ENCODE measurements at regions of chr1 and their contacts with region 1.

Region 1: GRCh38 chr1:61851849-61852669 is 109.8 kb downstream of the PATJ start:
- DNase-seq: peak; percentile 69
- H3K4me3 ChIP-seq: no peak overlapping the region
- H3K27ac ChIP-seq: no peak overlapping the region
- H3K4me1 ChIP-seq: no peaks in the 10 kb centered on the region
- CTCF ChIP-seq: peak; percentile 95

Region 2: GRCh38 chr1:59971464-59971911 is 1880.6 kb before region 1 on chr1:
- CTCF ChIA-PET with region 1: no interaction called
- POLR2A ChIA-PET with region 1: no interaction called
- intact Hi-C with region 1: loop called (anchors 10 kb)
- DNase-seq: peak; percentile 20
- H3K4me3 ChIP-seq: no peak overlapping the region
- H3K27ac ChIP-seq: no peak overlapping the region
- H3K4me1 ChIP-seq: no peaks in the 10 kb centered on the region
- CTCF ChIP-seq: peak; percentile 87

Region 3: GRCh38 chr1:60978421-60979357 is 873.4 kb before region 1 on chr1:
- CTCF ChIA-PET with region 1: no interaction called
- POLR2A ChIA-PET with region 1: no interaction called
- intact Hi-C with region 1: loop called (anchors 10 kb)
- DNase-seq: peak; percentile 49
- H3K4me3 ChIP-seq: no peak overlapping the region
- H3K27ac ChIP-seq: no peak overlapping the region
- H3K4me1 ChIP-seq: no peaks in the 10 kb centered on the region
- CTCF ChIP-seq: peak; percentile 85

Region 4: GRCh38 chr1:61344696-61345095 is 507.4 kb before region 1 on chr1:
- CTCF ChIA-PET with region 1: no interaction called
- POLR2A ChIA-PET with region 1: no interaction called
- intact Hi-C with region 1: loop called (anchors 5 kb)
- DNase-seq: no peak
- H3K4me3 ChIP-seq: no peak overlapping the region
- H3K27ac ChIP-seq: no peak overlapping the region
- H3K4me1 ChIP-seq: no peaks in the 10 kb centered on the region
- CTCF ChIP-seq: no peak

Region 5: DNA sequence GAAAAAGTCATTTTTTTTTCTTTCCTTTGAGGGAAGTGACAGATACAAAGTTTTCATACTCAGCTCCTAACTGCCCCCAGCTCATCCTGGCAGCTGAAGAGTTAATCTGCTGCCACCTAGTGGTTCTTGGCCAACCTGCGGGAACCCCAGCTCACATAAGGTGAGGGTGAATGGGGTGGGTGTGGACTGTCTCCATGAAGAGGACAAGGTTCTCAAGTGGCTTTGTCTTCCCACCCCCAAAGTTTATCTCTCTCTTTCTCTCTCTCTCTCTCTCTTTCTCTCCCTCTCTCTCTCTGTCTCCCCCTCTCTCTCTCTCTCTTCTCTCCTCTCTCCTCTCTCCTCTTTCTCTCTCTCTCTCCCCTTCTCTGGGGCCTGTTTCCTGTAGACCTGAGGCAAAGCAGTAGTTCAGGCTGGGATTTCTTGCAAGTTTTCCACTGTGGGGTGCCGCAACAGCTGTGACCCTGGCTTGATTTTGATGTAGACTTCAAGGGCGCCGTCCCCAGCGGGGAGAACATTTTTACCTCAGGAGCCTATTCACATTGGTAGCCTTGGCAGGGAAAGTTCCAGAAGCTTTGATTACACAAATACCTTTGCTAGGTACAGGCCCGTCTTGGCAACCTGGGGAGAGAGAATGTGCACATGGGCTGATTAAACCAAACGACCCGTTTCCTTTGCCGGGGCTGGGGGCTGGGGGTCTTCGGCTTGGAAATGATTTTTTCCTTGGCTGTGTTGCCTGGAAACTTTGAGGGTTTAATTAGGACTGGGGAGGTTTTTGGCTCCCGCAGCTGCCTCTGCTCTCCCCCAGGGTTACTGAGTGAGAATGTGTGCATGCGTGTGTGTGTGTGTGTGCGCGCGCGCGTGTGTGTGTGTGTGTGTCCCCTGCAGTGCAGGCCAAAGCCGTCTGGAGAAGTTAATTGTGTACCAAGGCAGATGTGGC is 263.1 kb before region 1 on chr1:
- CTCF ChIA-PET with region 1: no interaction called
- POLR2A ChIA-PET with region 1: no interaction called
- intact Hi-C with region 1: loop called (anchors 5 kb)
- DNase-seq: peak; percentile 62
- H3K4me3 ChIP-seq: no peak overlapping the region
- H3K27ac ChIP-seq: no peak overlapping the region
- H3K4me1 ChIP-seq: no peaks in the 10 kb centered on the region
- CTCF ChIP-seq: peak; percentile 93

Measured in OCI-LY7 (cell line).